ENCODE measurements at regions of chr4 and their contacts with region 1.

Region 1: DNA sequence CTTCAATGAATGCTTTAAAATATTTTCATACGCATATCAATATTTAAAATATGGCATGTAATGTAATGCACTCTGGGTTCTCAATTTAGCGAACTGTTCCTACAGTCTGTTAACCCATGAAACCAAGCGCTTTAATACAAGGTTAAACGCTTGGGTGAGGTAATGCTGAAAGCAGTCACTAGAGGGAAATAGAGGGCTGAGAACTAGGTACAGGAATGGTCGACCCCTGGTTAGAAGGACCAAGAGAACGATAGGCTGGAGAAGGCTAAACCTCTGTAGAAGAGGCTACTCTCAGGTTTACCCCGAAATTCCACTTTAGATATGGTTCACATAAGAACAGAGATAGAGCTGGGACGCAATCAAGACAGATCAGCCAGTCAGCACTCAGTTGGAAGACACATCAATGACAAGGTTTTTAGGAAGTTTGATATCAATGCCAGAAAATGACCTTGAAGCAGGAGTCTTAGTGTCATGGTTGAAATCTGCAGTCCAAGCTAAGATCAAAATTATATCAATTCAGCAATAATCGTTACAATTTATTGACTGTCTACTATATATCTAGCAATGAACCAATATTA is 26.9 kb downstream of the ARSJ start:
- DNase-seq: peak; percentile 5 to 64
- H3K4me3 ChIP-seq: no peak overlapping the region
- H3K27ac ChIP-seq: no peak overlapping the region
- H3K4me1 ChIP-seq: peaks cover 0 to 2% (median 0%) of the 10 kb centered on the region in 4 experiments; a peak in 1 of 7 replicates
- H3K27me3 ChIP-seq: no peaks in the 10 kb centered on the region
- CTCF ChIP-seq: peak in 2 of 3 experiments; percentile 87 to 88; a peak in 3 of 4 replicates
- EP300 ChIP-seq: no peak
- POLR2A ChIP-seq: no peak
- RAD21 ChIP-seq: peak; percentile 95 to 96

Region 2: GRCh38 chr4:114076899-114077570 is 124.5 kb after region 1 on chr4:
- CTCF ChIA-PET with region 1: interaction called, 35 read pairs
- POLR2A ChIA-PET with region 1: no interaction called
- DNase-seq: no peak
- H3K4me3 ChIP-seq: no peak overlapping the region
- H3K27ac ChIP-seq: no peak overlapping the region
- H3K4me1 ChIP-seq: peaks cover 0 to 7% (median 3%) of the 10 kb centered on the region in 4 experiments; a peak in 4 of 7 replicates
- H3K27me3 ChIP-seq: no peaks in the 10 kb centered on the region
- CTCF ChIP-seq: no peak
- EP300 ChIP-seq: no peak
- POLR2A ChIP-seq: no peak
- RAD21 ChIP-seq: no peak

Region 3: GRCh38 chr4:114116861-114117260 is 164.3 kb after region 1 on chr4:
- CTCF ChIA-PET with region 1: no interaction called
- POLR2A ChIA-PET with region 1: no interaction called
- DNase-seq: no peak
- H3K4me3 ChIP-seq: no peak overlapping the region
- H3K27ac ChIP-seq: no peak overlapping the region
- H3K4me1 ChIP-seq: no peaks in the 10 kb centered on the region
- H3K27me3 ChIP-seq: no peaks in the 10 kb centered on the region
- CTCF ChIP-seq: no peak
- EP300 ChIP-seq: no peak
- POLR2A ChIP-seq: no peak
- RAD21 ChIP-seq: no peak

Measured in H1 (cell line).